ENCODE measurements at regions of chr19 and their contacts with region 1.

Region 1: GRCh38 chr19:41641879-41642485 is 15.1 kb upstream of the CEACAM4 start:
- DNase-seq: peak; percentile 37 to 77 (median 65)
- ATAC-seq: peak; percentile 81
- H3K4me3 ChIP-seq: no peak overlapping the region
- H3K4me3 Mint-ChIP-seq: no peak overlapping the region
- H3K27ac ChIP-seq: no peak overlapping the region
- H3K27ac Mint-ChIP-seq: peak overlapping the region in 5 of 9 donors; percentile 0 to 77 (median 44)
- H3K4me1 ChIP-seq: peaks cover 0 to 29% of the 10 kb centered on the region in 2 donors
- H3K4me1 Mint-ChIP-seq: peaks cover 0 to 44% (median 36%) of the 10 kb centered on the region in 7 donors
- H3K27me3 ChIP-seq: no peaks in the 10 kb centered on the region
- H3K27me3 Mint-ChIP-seq: peaks cover 0 to 12% (median 8%) of the 10 kb centered on the region in 5 donors

Region 2: DNA sequence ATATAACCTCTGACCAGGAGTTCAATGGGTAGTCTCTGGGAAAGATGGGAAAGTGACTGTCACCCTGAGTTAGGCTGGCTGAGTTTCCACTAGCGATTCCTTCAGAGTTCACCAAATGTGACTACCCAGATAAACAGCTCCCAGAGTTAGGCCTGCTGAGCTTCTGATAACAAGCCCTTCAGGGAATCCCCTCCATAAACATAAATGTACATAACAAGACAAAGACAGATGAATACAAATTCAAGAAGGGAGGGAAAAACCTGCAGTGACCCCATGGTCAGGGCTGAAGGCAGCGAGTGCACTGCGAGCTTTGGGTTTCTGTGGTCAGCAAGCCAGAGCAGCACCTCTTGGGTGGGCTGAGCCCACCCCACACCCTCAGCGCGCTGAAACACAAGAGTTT is 10.3 kb after region 1 on chr19:
- CTCF ChIA-PET with region 1: interaction called, 30 read pairs
- POLR2A ChIA-PET with region 1: interaction called, 4 read pairs
- intact Hi-C with region 1: no loop called
- DNase-seq: no peak
- ATAC-seq: no peak
- H3K4me3 ChIP-seq: no peak overlapping the region
- H3K4me3 Mint-ChIP-seq: no peak overlapping the region
- H3K27ac ChIP-seq: no peak overlapping the region
- H3K27ac Mint-ChIP-seq: no peak overlapping the region
- H3K4me1 ChIP-seq: peaks cover 7% of the 10 kb centered on the region in 2 donors
- H3K4me1 Mint-ChIP-seq: peaks cover 0 to 11% (median 4%) of the 10 kb centered on the region in 7 donors
- H3K27me3 ChIP-seq: peaks cover 0 to 4% of the 10 kb centered on the region in 2 donors
- H3K27me3 Mint-ChIP-seq: peaks cover 20 to 66% (median 49%) of the 10 kb centered on the region in 5 donors

Region 3: GRCh38 chr19:41691268-41691970 is 49.4 kb after region 1 on chr19:
- CTCF ChIA-PET with region 1: interaction called, 53 read pairs
- POLR2A ChIA-PET with region 1: interaction called, 3 read pairs
- intact Hi-C with region 1: loop called (anchors 5 kb)
- DNase-seq: peak in 4 of 9 donors; percentile 6 to 38 (median 8)
- ATAC-seq: no peak
- H3K4me3 ChIP-seq: no peak overlapping the region
- H3K4me3 Mint-ChIP-seq: peak overlapping the region in 1 of 10 donors; percentile 7
- H3K27ac ChIP-seq: no peak overlapping the region
- H3K27ac Mint-ChIP-seq: peak overlapping the region in 1 of 9 donors; percentile 51
- H3K4me1 ChIP-seq: no peaks in the 10 kb centered on the region
- H3K4me1 Mint-ChIP-seq: peaks cover 0 to 6% (median 0%) of the 10 kb centered on the region in 7 donors
- H3K27me3 ChIP-seq: no peaks in the 10 kb centered on the region
- H3K27me3 Mint-ChIP-seq: peaks cover 16 to 56% (median 51%) of the 10 kb centered on the region in 5 donors

Region 4: GRCh38 chr19:41706741-41707501 is 64.9 kb after region 1 on chr19:
- CTCF ChIA-PET with region 1: interaction called, 15 read pairs
- POLR2A ChIA-PET with region 1: no interaction called
- intact Hi-C with region 1: loop called in 1 of 2 experiments (anchors 5 kb)
- DNase-seq: peak; percentile 58 to 79 (median 72)
- ATAC-seq: peak; percentile 95
- H3K4me3 ChIP-seq: peak overlapping the region; percentile 56
- H3K4me3 Mint-ChIP-seq: peak overlapping the region; percentile 60 to 81 (median 74)
- H3K27ac ChIP-seq: no peak overlapping the region
- H3K27ac Mint-ChIP-seq: no peak overlapping the region
- H3K4me1 ChIP-seq: no peaks in the 10 kb centered on the region
- H3K4me1 Mint-ChIP-seq: peaks cover 0 to 12% (median 5%) of the 10 kb centered on the region in 7 donors
- H3K27me3 ChIP-seq: no peaks in the 10 kb centered on the region
- H3K27me3 Mint-ChIP-seq: peaks cover 16 to 45% (median 29%) of the 10 kb centered on the region in 5 donors

Region 5: GRCh38 chr19:41746593-41747227 is 104.7 kb after region 1 on chr19:
- CTCF ChIA-PET with region 1: interaction called, 8 read pairs
- POLR2A ChIA-PET with region 1: no interaction called
- intact Hi-C with region 1: loop called (anchors 5 kb)
- DNase-seq: peak in 8 of 9 donors; percentile 27 to 62 (median 48)
- ATAC-seq: peak; percentile 82
- H3K4me3 ChIP-seq: no peak overlapping the region
- H3K4me3 Mint-ChIP-seq: no peak overlapping the region
- H3K27ac ChIP-seq: no peak overlapping the region
- H3K27ac Mint-ChIP-seq: no peak overlapping the region
- H3K4me1 ChIP-seq: no peaks in the 10 kb centered on the region
- H3K4me1 Mint-ChIP-seq: peaks cover 0 to 10% (median 0%) of the 10 kb centered on the region in 7 donors
- H3K27me3 ChIP-seq: peaks cover 0 to 3% of the 10 kb centered on the region in 2 donors
- H3K27me3 Mint-ChIP-seq: peaks cover 45 to 71% (median 46%) of the 10 kb centered on the region in 5 donors

Measured in naive thymus-derived CD4-positive, alpha-beta T cell (primary cell).